ENCODE measurements at regions of chr17 and their contacts with region 1.

Region 1: DNA sequence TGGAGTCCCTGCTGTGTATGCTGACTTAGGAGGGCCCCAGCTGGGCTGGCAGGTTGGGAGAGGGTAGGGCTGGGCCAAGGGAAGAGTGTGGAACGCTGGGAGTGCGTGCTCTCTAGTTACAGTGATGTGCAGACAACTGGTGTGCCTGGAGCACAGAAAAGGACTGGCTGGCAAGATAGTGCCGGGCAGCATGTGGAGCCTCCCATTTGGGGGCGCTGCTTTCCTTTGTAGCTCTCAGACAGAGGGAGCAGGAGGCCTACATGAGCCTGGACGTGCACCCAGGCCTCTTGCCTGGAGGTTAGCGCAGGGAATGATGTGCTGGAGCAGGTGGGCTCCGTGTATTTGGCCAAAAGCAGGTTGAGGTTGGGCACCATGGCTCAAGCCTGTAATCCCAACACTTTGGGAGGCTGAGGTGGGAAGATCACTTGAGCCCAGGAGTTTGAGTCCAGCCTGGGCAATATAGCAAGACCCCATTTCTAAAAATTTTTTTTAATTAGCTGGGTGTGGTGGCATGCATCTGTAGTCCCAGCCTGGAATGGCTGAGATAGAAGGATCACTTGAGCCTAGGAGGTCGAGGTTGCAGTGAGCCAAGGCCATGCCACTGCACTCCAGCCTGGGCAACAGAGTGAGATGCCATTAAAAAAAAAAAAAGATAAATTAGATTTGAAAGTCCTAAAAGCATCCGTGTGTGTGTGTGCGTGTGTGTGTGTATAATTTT is 26.1 kb upstream of the TBX4 start:
- DNase-seq: peak in 2 of 4 experiments; percentile 1 to 24
- ATAC-seq: peak; percentile 71
- H3K4me3 ChIP-seq: no peak overlapping the region
- H3K27ac ChIP-seq: no peak overlapping the region
- H3K4me1 ChIP-seq: no peaks in the 10 kb centered on the region
- H3K27me3 ChIP-seq: peaks cover 4 to 11% of the 10 kb centered on the region in 2 experiments; a peak in 3 of 5 replicates
- CTCF ChIP-seq: peak; percentile 38 to 53 (median 47); a peak in 5 of 6 replicates
- EP300 ChIP-seq: no peak
- POLR2A ChIP-seq: no peak
- RAD21 ChIP-seq: peak in 1 of 2 experiments; percentile 50; a peak in 2 of 4 replicates

Region 2: DNA sequence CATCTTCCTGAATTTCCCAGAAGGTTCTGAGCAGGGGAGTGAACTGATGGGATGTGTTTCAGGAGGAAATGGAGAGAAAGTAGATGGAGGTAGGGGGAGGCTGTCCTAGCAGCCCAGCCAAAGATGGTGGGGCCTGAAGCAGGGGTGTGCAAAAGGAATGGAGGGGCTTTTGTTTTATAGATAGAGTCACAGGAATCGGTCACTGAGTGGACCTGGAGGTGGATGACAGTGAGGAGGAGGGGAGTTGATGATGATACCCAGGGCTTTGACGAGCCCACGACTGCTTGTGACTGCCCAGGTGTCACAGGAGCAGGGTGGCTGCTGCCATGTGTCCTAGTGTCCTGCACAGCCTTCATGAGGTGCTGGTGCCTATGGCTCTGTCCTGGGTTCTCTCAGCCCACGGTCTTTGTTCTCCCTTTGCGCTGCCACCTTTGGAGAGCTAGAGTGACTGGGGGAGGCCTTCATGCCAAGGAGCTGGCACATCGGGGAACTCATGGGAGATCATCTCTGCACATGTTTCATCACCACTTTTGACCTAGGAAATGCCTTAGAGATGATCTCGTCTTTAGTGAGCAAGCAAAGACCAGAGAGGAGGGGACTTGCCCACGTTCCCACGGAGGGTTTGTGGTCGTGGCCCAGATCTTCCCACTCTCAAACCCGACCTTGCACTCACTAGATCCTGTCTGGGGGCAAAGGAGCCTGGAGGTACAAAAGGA is 49.4 kb after region 1 on chr17:
- CTCF ChIA-PET with region 1: no interaction called
- POLR2A ChIA-PET with region 1: no interaction called
- in situ Hi-C with region 1: no loop called
- intact Hi-C with region 1: no loop called
- DNase-seq: no peak
- ATAC-seq: no peak
- H3K4me3 ChIP-seq: no peak overlapping the region
- H3K27ac ChIP-seq: no peak overlapping the region
- H3K4me1 ChIP-seq: peaks cover 0 to 3% of the 10 kb centered on the region in 2 experiments; a peak in 1 of 5 replicates
- H3K27me3 ChIP-seq: peaks cover 25 to 73% of the 10 kb centered on the region in 2 experiments
- CTCF ChIP-seq: no peak
- EP300 ChIP-seq: no peak
- POLR2A ChIP-seq: no peak
- RAD21 ChIP-seq: no peak

Region 3: DNA sequence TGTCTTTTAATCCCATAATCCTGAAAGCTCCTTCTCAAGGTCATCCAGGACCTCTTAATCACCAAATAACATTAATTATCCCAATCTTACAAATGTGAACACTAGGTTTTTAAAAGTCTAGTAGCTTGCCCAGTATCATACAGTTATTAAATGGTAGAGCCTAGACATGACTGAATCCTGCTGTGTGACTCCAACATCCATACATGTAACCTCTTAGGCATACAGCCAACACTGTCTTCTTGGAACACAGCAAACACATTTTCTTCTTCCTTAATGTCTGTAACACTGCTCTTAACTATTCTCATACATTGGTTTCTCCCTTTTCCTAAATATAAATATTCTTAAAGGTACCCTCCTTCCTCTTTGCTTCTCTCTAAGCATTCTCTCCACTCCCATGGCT is 423.5 kb after region 1 on chr17:
- CTCF ChIA-PET with region 1: no interaction called
- POLR2A ChIA-PET with region 1: no interaction called
- in situ Hi-C with region 1: loop called (anchors 10 kb)
- intact Hi-C with region 1: no loop called
- DNase-seq: no peak
- ATAC-seq: no peak
- H3K4me3 ChIP-seq: no peak overlapping the region
- H3K27ac ChIP-seq: no peak overlapping the region
- H3K4me1 ChIP-seq: no peaks in the 10 kb centered on the region
- H3K27me3 ChIP-seq: no peaks in the 10 kb centered on the region
- CTCF ChIP-seq: no peak
- EP300 ChIP-seq: no peak
- POLR2A ChIP-seq: no peak
- RAD21 ChIP-seq: no peak

Measured in K562 (cell line).